ENCODE measurements at regions of chr20 and their contacts with region 1.

Region 1: GRCh38 chr20:2282181-2282580 is 13.6 kb upstream of the TGM3 start:
- DNase-seq: no peak
- H3K4me3 ChIP-seq: no peak overlapping the region
- H3K27ac ChIP-seq: no peak overlapping the region
- H3K4me1 ChIP-seq: no peaks in the 10 kb centered on the region
- CTCF ChIP-seq: no peak

Region 2: GRCh38 chr20:2005831-2006426 is 276.3 kb before region 1 on chr20:
- CTCF ChIA-PET with region 1: interaction called, 11 read pairs
- POLR2A ChIA-PET with region 1: no interaction called
- intact Hi-C with region 1: no loop called
- DNase-seq: peak; percentile 56
- H3K4me3 ChIP-seq: no peak overlapping the region
- H3K27ac ChIP-seq: no peak overlapping the region
- H3K4me1 ChIP-seq: no peaks in the 10 kb centered on the region
- CTCF ChIP-seq: no peak